Activated T-helper 1 cell treated with anti-CD3 and anti-CD28 coated beads, Interleukin-12 subunit alpha, Interleukin-12 subunit beta, Interleukin-2, Interleukin-4 antibody, amounts not matched to agents 30 ng/mL and 10 ng/mL and 1 ng/mL, durations not matched to agents 14 hours and 24 hours and 36 hours (primary cell): ENCODE measurements at regions of chr2 and their contacts with region 1.

Region 1: DNA sequence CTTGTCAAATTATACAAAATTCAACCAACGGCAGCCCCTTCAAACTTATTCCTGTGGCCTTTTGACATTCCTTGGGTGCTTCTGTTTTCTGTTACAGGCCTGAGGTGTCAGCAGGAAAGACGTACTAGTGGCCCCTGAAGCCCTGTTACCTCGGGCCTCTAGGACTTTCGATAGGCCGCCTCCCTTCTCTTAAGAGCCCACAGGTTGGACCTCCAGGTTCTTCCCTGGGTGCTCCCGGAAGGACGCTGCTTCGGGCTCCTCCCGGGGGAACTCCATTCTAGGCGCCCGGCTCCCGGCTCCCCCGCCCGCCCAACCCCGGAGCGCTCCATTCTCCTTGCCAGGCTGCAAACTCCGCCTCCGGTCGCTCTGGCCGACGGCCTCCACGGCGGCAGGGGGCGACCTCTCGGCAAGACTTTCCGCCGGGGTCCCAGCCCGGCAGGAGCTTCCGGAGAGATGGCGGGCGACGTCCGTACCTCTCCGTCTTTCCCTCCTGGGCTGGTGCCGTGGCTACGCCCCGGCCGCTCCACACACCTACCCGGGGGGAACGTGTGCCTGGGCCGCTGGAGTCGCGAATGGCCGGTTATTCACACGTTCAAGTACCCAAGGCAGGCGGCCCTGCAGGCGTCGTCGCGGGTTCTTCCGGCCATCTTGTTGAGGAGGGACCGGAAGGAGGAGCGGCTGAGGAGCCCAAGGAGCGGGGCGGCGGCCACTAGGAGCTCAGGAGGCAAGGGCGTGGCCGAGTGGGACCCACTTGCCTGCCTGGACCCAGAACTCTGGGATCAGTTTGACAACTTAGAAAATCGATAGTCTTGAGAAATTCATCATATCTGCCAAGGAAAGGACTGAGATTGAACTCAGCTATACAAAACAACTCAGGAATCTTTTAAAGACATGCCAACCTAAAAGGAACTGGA is 27.5 kb downstream of the BOLA3 start:
- DNase-seq: peak; percentile 82
- H3K4me3 Mint-ChIP-seq: peak overlapping the region; percentile 82
- H3K27ac Mint-ChIP-seq: peak overlapping the region; percentile 88
- H3K4me1 Mint-ChIP-seq: peaks cover 7% of the 10 kb centered on the region
- H3K27me3 Mint-ChIP-seq: peaks cover 12% of the 10 kb centered on the region

Region 2: DNA sequence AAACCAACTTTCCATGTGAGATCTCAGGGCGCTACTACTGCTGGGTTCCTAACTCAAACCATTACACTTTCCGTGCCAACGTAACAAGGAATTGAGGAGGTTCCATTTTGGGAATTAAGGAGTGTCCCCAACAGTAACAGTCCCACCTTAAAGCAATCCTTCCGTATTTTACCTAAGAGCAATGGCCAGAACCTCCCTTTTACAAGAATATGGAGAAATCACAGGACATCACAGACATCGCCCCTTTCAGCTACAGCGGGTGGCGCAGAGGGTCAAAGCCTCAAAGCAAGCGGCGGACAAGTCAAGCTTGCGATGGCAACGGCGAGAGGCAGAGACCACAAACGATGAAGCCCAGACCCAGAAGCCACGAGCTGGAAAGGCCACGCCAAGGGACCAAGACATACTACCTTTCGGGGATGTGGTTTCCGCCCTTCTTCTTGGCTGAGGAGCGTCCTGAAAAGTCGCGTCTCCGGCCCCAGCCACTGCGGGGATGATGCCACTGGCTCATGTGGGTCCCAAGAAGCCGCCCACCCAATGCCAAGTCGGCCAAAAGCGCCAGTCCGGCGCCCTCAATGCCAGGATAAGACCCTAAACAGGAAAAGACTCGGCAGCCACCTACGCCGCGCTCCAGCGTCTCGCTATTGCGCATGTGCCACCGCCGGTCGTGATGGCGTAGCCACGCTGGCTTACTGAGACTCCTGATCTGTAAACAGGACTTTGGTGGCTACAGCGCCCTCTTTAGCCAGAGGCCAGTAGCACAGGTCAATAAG is 340.5 kb before region 1 on chr2 and contains the start of gene DUSP11:
- intact Hi-C with region 1: loop called (anchors 1 kb)
- DNase-seq: peak; percentile 94
- H3K4me3 Mint-ChIP-seq: peak within 1 kb of the TSS; percentile 99
- H3K27ac Mint-ChIP-seq: peak within 1 kb of the TSS; percentile 94
- H3K4me1 Mint-ChIP-seq: peaks cover 26% of the 10 kb centered on the region
- H3K27me3 Mint-ChIP-seq: no peaks in the 10 kb centered on the region
- total RNA-seq, gene DUSP11: 42.1 and 42.4 TPM in 2 replicates

Region 3: DNA sequence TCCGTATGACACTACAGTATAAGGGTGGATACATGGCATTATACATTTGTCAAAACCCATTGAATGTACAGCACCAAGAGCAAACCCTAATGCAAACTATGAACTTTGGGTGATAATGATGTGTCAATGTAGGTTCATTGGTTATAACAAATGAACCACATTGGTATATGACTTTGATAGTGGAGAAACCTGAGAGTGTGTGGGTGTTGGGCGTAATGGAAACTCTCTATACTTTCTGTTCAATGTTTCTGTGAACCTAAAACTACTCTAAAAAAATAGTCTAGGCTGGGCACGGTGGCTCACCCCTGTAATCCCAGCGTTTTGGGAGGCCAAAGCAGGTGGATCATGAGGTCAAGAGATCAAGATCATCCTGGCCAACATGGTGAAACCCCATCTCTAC is 233.8 kb before region 1 on chr2:
- intact Hi-C with region 1: loop called (anchors 1 kb)
- DNase-seq: no peak
- H3K4me3 Mint-ChIP-seq: peak overlapping the region; percentile 63
- H3K27ac Mint-ChIP-seq: peak overlapping the region; percentile 84
- H3K4me1 Mint-ChIP-seq: peaks cover 29% of the 10 kb centered on the region
- H3K27me3 Mint-ChIP-seq: peaks cover 4% of the 10 kb centered on the region

Region 4: DNA sequence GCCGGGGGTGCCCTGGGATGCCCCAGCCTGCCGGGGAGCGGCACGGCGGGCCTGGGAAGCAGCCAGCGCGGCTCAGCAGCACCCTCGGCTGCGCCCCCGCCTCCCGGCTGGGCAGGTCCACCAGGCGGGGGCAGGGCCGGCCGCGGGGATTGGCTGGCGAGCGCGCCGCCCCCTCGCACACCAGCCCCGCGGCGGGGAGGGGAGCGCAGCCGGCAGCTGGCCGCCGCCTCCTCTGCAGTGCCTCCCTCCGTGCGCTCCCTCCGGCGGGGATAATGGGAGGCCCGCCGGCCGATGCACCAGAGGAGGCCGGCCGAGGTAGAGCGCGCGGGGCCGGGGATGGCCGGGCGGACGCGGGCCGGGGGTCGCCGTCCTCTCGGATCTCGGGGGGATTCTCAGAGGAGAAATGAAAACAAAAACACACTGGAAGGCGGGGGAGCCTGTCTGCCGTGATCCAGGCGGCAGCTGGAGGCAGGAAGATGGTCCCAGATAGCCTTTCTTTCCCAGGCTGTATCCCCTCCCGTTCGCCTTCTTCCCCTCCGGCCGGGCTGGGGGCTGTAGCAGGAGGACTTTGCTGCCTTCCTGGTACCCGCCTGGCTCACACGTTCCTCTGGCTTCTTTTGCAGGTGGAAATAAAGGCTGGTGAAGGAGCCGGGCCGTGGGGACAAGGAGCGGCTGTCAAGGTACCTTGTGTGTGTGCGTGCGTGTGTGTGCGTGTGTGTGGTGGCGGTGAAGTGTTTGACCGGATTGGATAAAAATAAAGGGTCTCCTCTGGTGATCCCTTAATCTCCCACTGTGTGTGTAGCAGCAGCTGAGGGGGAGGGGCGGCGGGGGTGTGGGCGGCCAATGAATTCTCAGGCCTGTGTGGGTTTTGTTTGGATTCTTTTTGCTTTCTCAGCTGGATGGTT is 117.4 kb before region 1 on chr2:
- intact Hi-C with region 1: loop called (anchors 5 kb)
- DNase-seq: peak; percentile 81
- H3K4me3 Mint-ChIP-seq: peak overlapping the region; percentile 89
- H3K27ac Mint-ChIP-seq: peak overlapping the region; percentile 66
- H3K4me1 Mint-ChIP-seq: peaks cover 69% of the 10 kb centered on the region
- H3K27me3 Mint-ChIP-seq: peaks cover 2% of the 10 kb centered on the region

Region 5: DNA sequence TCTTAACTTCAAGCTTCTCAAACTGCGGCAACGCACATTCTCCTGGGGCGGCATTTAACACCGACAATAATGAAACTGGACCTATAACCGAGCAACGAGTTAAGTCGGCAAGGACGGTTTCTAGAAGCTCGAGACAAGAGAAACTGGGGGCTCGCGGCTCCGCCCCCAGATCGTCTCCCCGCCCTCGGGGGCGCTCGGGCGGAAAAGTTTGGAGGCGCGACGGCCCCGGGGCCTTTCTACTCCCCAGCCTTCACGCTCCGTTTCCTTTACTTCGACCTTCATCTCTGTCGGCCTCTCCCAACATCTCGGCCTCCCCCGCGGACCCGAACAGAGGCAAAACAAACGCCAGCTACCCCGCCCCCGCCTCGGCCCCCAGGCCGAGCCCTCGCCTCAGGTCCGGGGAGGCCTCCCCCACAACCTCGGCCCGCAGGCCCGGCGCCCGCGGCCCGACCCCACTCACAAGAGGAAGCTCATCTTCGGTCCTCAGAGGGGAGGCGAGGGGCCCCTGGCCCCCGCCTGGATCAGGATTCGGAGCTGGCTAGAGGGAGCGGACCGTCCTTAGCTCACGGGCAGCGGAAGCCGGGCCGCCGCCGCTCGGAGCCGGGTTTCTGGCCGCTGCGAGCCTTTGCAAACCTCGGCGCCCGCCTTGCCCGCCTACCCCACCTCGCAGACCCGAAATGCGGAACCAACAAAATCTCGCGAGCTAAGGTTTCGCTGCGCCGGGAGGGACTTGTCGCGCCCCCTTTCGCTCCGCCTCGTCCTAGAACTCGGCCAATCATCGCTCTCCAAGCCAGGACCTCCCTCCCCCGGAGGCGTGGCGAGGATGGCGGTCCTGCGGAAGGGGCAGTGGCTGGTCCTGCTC is 58.3 kb after region 1 on chr2 and contains the start of gene MOB1A:
- intact Hi-C with region 1: loop called (anchors 1 kb)
- DNase-seq: peak; percentile 99
- H3K4me3 Mint-ChIP-seq: peak within 1 kb of the TSS; percentile 88
- H3K27ac Mint-ChIP-seq: peak within 1 kb of the TSS; percentile 85
- H3K4me1 Mint-ChIP-seq: peaks cover 40% of the 10 kb centered on the region
- H3K27me3 Mint-ChIP-seq: no peaks in the 10 kb centered on the region
- total RNA-seq, gene MOB1A: 207 and 221 TPM in 2 replicates

Region 6: DNA sequence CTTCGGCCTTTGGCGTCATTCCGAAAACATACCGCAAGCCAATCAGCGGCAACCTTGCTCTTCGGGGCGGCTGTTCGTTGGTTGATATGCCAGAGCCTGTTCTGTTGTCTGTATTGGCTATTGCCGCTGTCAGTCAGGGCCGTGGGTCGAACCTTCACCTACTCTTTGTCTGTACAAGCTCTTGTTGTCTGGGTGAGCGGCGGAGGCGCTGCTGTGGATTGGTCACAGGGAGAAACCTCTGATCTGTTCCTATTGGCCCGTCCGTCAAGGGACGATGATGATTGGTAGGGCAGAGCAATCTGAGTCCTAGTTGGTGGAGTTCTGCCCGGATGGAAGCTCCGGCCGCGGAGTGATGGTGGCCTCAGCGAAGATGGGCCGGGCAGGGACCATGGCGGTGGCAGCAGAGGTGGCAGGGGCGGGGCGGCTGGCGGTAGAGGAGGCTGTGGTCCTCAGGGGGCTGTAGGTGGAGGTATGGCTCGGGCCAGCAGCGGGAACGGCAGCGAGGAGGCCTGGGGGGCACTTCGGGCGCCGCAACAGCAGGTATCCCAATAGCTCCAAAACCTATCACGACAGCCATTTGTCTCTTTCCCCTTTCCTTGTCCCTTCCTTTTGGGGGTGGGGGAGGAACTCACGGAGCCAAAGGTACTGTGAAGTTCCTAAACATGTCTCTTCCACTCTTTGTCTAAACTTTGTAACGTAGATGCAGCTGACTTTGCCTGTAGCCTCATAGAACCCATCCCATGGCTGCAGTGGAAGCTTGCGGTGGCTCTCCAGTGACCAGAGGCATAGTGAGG is 338.2 kb after region 1 on chr2 and contains the start of gene WBP1:
- intact Hi-C with region 1: no loop called
- DNase-seq: peak; percentile 99
- H3K4me3 Mint-ChIP-seq: peak within 1 kb of the TSS; percentile 98
- H3K27ac Mint-ChIP-seq: peak within 1 kb of the TSS; percentile 98
- H3K4me1 Mint-ChIP-seq: peaks cover 61% of the 10 kb centered on the region
- H3K27me3 Mint-ChIP-seq: no peaks in the 10 kb centered on the region
- total RNA-seq, gene WBP1: 32.6 and 35.3 TPM in 2 replicates